Aorta (tissue), 5 donors: ENCODE measurements at regions of chr6 and their contacts with region 1.

Region 1: GRCh38 chr6:33276864-33277662 is at the start of gene B3GALT4:
- DNase-seq: peak; percentile 84 to 92
- ATAC-seq: peak; percentile 82
- H3K4me3 ChIP-seq: peak within 1 kb of the TSS; percentile 46 to 50
- H3K27ac ChIP-seq: peak within 1 kb of the TSS; percentile 34 to 35
- H3K4me1 ChIP-seq: no peaks in the 10 kb centered on the region
- H3K27me3 ChIP-seq: no peaks in the 10 kb centered on the region
- total RNA-seq, gene B3GALT4: 12.7 to 14.3 TPM

Region 2: GRCh38 chr6:33132081-33132524 is 145.0 kb before region 1 on chr6:
- intact Hi-C with region 1: no loop called
- DNase-seq: no peak
- ATAC-seq: no peak
- H3K4me3 ChIP-seq: no peak overlapping the region
- H3K27ac ChIP-seq: no peak overlapping the region
- H3K4me1 ChIP-seq: no peaks in the 10 kb centered on the region
- H3K27me3 ChIP-seq: no peaks in the 10 kb centered on the region

Region 3: DNA sequence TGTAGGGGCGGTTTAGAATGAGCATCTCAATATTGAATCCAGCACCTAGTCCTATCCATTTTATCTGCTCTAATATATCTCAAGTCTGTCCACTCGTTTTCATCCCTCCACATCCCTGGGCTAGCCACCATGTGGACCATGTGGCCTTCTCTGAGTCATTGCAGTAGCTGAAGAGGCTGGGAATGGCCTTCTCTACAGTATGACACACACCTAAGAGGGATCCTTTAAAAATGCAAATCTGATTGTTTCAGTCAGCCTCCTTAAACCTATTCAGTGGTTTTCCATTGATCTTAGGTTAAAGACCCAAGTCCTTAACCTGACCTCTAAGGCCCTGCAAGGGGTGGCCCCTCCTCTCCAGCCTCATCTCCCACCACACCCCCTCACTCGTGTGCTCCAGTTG is 59.4 kb before region 1 on chr6:
- intact Hi-C with region 1: no loop called
- DNase-seq: no peak
- ATAC-seq: no peak
- H3K4me3 ChIP-seq: no peak overlapping the region
- H3K27ac ChIP-seq: no peak overlapping the region
- H3K4me1 ChIP-seq: no peaks in the 10 kb centered on the region
- H3K27me3 ChIP-seq: no peaks in the 10 kb centered on the region

Region 4: GRCh38 chr6:33317669-33318425 is 40.8 kb after region 1 on chr6 and contains the start of gene ZBTB22:
- intact Hi-C with region 1: loop called in 1 of 2 experiments (anchors 5 kb)
- DNase-seq: peak; percentile 99 to 100
- ATAC-seq: peak; percentile 87
- H3K4me3 ChIP-seq: peak within 1 kb of the TSS in 1 of 2 donors; percentile 45
- H3K27ac ChIP-seq: peak within 1 kb of the TSS in 1 of 2 donors; percentile 67
- H3K4me1 ChIP-seq: peaks cover 0 to 4% of the 10 kb centered on the region in 2 donors
- H3K27me3 ChIP-seq: no peaks in the 10 kb centered on the region
- total RNA-seq, gene ZBTB22: 21.3 TPM

Region 5: DNA sequence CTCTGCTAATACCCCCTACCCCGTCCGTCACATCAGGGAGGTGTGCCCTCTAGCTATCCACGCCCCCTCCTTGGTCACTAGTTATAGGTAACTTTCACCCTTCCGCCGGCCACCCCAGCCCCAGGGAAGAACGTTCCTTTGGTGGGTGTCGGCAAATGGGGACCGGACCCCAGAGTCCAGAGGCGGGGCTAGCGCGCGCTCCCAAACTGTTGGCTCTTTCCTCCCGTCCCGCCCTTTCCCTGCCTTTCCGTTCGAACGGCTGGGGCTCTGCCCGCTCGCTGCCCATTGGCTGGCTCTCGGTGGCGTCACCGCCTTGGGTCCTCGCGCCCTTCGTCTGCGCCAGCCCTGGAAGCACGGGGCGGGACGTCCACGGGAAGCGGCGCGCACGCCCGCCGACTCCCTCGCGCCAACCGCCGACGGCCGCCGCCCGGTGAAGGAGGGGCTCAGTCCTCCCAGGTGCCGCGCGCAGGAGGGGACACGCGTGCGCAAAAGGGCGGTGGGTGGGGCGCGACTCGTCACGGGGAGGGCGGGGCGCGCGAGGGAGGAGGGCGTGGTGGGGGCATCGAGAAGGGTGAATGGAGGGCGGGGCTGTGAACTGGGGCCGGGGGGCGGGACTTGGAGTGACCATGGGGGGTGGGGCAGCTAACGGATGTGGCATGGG is 133.1 kb after region 1 on chr6:
- intact Hi-C with region 1: loop called in 1 of 2 experiments (anchors 5 kb)
- DNase-seq: peak; percentile 99
- ATAC-seq: peak; percentile 97
- H3K4me3 ChIP-seq: peak overlapping the region; percentile 79 to 99
- H3K27ac ChIP-seq: peak overlapping the region in 1 of 2 donors; percentile 54
- H3K4me1 ChIP-seq: no peaks in the 10 kb centered on the region
- H3K27me3 ChIP-seq: no peaks in the 10 kb centered on the region

Region 6: DNA sequence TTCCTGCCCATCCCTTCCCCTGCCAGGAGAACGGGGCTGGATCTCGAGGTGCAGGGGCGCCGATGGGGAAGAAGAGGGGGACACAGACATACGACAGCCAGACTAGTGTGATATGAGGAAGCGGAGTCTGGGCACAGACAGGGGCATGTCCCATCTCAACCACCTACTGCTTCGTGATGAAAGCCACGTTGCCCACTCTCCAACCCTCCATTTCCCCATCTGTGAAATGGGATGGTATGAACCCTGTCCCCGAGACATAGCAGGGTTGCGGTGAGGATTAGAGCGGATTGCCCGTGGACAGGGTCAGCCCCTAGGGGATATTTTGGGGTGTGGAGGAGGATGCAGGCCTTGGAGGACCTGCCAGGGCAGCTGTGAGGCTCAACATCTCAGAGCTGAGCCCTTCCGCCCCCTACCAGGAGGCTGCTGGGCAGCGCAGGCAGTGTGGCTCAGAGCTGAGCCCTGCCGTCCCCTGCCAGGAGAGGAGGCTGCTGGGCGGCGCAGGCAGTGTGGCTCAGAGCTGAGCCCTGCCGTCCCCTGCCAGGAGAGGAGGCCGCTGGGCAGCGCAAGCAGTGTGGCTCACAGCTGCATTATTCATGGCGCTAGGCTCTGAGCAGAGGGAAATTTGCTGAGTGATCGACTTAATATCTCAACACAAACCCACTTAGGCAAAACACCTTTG is 797.1 kb after region 1 on chr6:
- intact Hi-C with region 1: no loop called
- DNase-seq: no peak
- ATAC-seq: no peak
- H3K4me3 ChIP-seq: no peak overlapping the region
- H3K27ac ChIP-seq: no peak overlapping the region
- H3K4me1 ChIP-seq: no peaks in the 10 kb centered on the region
- H3K27me3 ChIP-seq: no peaks in the 10 kb centered on the region